ENCODE measurements at regions of chr13 and their contacts with region 1.

Region 1: GRCh38 chr13:27130979-27131623 is 40.5 kb downstream of the USP12 start:
- DNase-seq: peak; percentile 75
- H3K4me3 Mint-ChIP-seq: peak overlapping the region; percentile 31
- H3K27ac Mint-ChIP-seq: peak overlapping the region; percentile 80
- H3K4me1 Mint-ChIP-seq: peaks cover 73% of the 10 kb centered on the region
- H3K27me3 Mint-ChIP-seq: no peaks in the 10 kb centered on the region

Region 2: GRCh38 chr13:25901460-25902376 is 1229.4 kb before region 1 on chr13:
- intact Hi-C with region 1: loop called (anchors 10 kb)
- DNase-seq: peak; percentile 44
- H3K4me3 Mint-ChIP-seq: no peak overlapping the region
- H3K27ac Mint-ChIP-seq: no peak overlapping the region
- H3K4me1 Mint-ChIP-seq: peaks cover 30% of the 10 kb centered on the region
- H3K27me3 Mint-ChIP-seq: peaks cover 7% of the 10 kb centered on the region

Region 3: DNA sequence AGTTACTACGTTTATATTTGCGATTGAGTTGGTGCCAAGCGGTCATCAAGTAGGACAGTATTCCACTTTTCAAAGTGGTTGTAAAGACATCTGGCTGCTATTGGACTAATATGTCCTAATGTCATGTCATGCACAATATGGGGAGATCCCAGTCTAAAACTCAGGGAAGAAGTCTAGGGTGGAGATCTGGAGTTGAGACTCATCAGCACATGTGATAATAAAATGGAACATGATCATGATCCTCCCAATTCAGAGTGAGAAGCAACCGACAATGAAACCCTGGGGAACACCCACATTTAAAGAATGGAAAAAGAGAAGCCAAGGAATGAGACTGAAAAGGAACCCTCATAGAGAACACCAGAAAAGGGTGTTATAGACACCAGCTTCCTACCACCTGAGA is 39.6 kb before region 1 on chr13:
- intact Hi-C with region 1: loop called (anchors 5 kb)
- DNase-seq: no peak
- H3K4me3 Mint-ChIP-seq: no peak overlapping the region
- H3K27ac Mint-ChIP-seq: no peak overlapping the region
- H3K4me1 Mint-ChIP-seq: peaks cover 6% of the 10 kb centered on the region
- H3K27me3 Mint-ChIP-seq: no peaks in the 10 kb centered on the region

Region 4: GRCh38 chr13:27112006-27112405 is 19.1 kb before region 1 on chr13:
- intact Hi-C with region 1: no loop called
- DNase-seq: no peak
- H3K4me3 Mint-ChIP-seq: no peak overlapping the region
- H3K27ac Mint-ChIP-seq: no peak overlapping the region
- H3K4me1 Mint-ChIP-seq: peaks cover 3% of the 10 kb centered on the region
- H3K27me3 Mint-ChIP-seq: no peaks in the 10 kb centered on the region

Region 5: GRCh38 chr13:27171827-27172494 is 40.9 kb after region 1 on chr13:
- intact Hi-C with region 1: loop called (anchors 1 kb)
- DNase-seq: peak; percentile 86
- H3K4me3 Mint-ChIP-seq: peak overlapping the region; percentile 80
- H3K27ac Mint-ChIP-seq: peak overlapping the region; percentile 88
- H3K4me1 Mint-ChIP-seq: peaks cover 53% of the 10 kb centered on the region
- H3K27me3 Mint-ChIP-seq: no peaks in the 10 kb centered on the region

Region 6: GRCh38 chr13:27251166-27252091 is 120.3 kb after region 1 on chr13 and contains the start of gene RPL21:
- intact Hi-C with region 1: loop called (anchors 2 kb)
- DNase-seq: peak; percentile 86
- H3K4me3 Mint-ChIP-seq: peak within 1 kb of the TSS; percentile 98
- H3K27ac Mint-ChIP-seq: peak within 1 kb of the TSS; percentile 99
- H3K4me1 Mint-ChIP-seq: peaks cover 35% of the 10 kb centered on the region
- H3K27me3 Mint-ChIP-seq: no peaks in the 10 kb centered on the region
- total RNA-seq, gene RPL21: 1,112 and 1,127 TPM in 2 replicates